ENCODE measurements at regions of chr12 and their contacts with region 1.

Region 1: DNA sequence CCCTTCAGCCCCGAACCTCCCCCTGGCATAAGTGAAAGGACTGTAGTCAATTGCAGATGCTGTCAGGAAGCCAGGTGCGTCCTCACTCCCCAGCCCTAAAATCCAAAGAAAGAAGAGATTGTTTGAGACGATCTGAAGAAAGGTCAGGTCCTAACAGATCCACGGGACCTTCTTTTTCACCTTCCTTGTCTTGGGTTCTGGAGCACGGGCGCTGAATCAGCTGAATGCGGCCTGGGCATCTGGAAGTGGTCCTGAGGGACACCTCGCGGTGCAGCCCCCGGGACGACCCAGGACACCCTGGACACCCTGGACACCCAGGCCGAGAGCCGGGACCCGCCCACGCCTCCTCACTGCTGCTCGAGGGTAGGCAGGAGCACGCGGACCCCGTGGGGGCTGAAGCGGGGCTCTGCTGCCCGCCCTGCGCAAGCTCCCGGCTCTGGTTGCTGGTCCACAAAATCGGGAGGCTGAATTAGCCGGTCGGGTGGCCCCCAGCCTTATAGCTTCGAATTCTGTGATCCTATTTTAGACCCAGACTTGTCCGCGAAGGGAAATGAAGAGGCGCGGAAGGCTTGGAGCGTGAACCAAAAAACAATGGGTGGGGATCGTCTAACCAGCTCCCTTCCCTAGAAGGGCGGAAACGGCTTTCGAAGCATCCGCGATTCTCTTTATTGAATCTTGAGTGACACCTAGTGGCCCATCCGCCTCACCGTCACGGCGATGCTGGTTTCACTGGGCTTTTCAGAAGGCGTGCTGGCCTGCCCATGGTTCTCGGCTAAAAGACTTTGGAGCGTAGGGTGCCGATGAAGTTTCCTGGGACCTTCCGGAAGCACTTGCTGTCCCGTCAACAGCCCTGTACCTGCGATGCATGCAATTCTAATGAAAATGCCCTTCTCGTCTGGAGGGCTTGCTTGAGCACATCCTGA is 46.4 kb upstream of the PLXNC1 start:
- DNase-seq: peak; percentile 81
- H3K4me3 Mint-ChIP-seq: peak overlapping the region; percentile 84
- H3K27ac Mint-ChIP-seq: peak overlapping the region; percentile 72
- H3K4me1 Mint-ChIP-seq: peaks cover 37% of the 10 kb centered on the region
- H3K27me3 Mint-ChIP-seq: peaks cover 10% of the 10 kb centered on the region

Region 2: DNA sequence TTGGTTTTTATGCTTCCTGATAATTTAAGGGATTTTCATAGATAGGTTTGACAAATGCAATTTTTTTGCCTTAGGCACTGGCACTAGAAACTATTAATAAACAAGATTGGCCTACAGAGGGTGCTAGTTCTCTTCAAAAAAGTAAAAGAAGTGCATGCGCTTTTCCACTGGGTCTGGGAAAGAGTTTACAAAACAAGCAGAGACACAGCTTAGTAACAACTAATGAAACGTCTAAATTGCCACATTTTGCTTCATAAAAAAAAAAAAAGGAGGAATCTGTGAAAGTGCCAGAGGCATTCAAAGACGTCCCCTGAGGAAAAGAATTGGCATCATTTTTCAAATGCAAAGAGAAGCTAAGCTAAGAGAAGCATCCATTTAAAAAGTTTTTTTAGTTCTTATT is 1114.6 kb before region 1 on chr12:
- intact Hi-C with region 1: loop called (anchors 1 kb)
- DNase-seq: no peak
- H3K4me3 Mint-ChIP-seq: no peak overlapping the region
- H3K27ac Mint-ChIP-seq: peak overlapping the region; percentile 79
- H3K4me1 Mint-ChIP-seq: peaks cover 30% of the 10 kb centered on the region
- H3K27me3 Mint-ChIP-seq: no peaks in the 10 kb centered on the region

Region 3: GRCh38 chr12:93419388-93420034 is 682.5 kb before region 1 on chr12:
- intact Hi-C with region 1: loop called (anchors 5 kb)
- DNase-seq: no peak
- H3K4me3 Mint-ChIP-seq: no peak overlapping the region
- H3K27ac Mint-ChIP-seq: peak overlapping the region; percentile 3
- H3K4me1 Mint-ChIP-seq: peaks cover 73% of the 10 kb centered on the region
- H3K27me3 Mint-ChIP-seq: no peaks in the 10 kb centered on the region

Region 4: DNA sequence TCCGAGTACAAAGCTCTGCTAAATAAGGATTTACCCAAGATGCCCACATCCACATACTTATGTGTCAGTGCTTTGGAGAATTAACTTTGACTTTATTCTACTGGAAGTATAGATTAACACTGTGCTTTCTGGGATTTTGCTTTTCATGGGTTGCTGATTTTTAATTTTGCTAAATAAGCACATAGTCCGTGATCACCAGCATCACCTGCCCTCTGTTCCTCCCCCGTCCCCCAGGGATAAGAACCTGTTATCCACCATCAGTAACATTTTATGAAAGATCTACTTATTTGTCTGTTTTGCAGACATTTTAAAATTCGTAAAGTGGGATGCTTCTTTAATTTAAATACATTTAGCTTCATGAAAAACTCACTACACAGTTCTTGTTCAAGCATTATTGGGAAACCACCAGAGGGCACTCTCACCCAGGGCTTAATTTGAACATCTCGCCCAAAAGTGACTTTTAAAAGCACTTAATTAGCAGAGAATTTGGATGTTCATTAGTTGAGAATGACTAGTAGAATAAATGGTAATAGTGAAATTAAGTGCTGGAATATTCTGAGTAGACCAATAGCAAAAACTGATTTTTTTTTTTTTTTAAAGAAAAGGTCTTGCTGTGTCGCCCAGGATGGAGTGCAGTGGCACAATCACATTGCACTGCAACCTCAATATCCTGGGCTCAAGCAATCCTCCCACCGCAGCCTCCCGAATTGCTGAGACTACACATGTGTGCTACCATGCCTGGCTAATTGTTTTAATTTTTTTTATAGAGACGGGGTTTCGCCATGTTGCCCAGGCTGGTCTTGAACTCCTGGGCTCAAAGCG is 599.0 kb before region 1 on chr12:
- intact Hi-C with region 1: loop called (anchors 1 kb)
- DNase-seq: peak; percentile 42
- H3K4me3 Mint-ChIP-seq: no peak overlapping the region
- H3K27ac Mint-ChIP-seq: no peak overlapping the region
- H3K4me1 Mint-ChIP-seq: peaks cover 32% of the 10 kb centered on the region
- H3K27me3 Mint-ChIP-seq: no peaks in the 10 kb centered on the region

Region 5: GRCh38 chr12:93742110-93742934 is 359.7 kb before region 1 on chr12:
- intact Hi-C with region 1: loop called (anchors 1 kb)
- DNase-seq: peak; percentile 40
- H3K4me3 Mint-ChIP-seq: peak overlapping the region; percentile 86
- H3K27ac Mint-ChIP-seq: peak overlapping the region; percentile 86
- H3K4me1 Mint-ChIP-seq: peaks cover 50% of the 10 kb centered on the region
- H3K27me3 Mint-ChIP-seq: peaks cover 2% of the 10 kb centered on the region

Region 6: GRCh38 chr12:93847517-93848474 is 254.2 kb before region 1 on chr12:
- intact Hi-C with region 1: loop called (anchors 1 kb)
- DNase-seq: peak; percentile 33
- H3K4me3 Mint-ChIP-seq: peak overlapping the region; percentile 49
- H3K27ac Mint-ChIP-seq: peak overlapping the region; percentile 86
- H3K4me1 Mint-ChIP-seq: peaks cover 74% of the 10 kb centered on the region
- H3K27me3 Mint-ChIP-seq: no peaks in the 10 kb centered on the region

Region 7: GRCh38 chr12:94078138-94078723 is 23.8 kb before region 1 on chr12:
- intact Hi-C with region 1: loop called (anchors 2 kb)
- DNase-seq: no peak
- H3K4me3 Mint-ChIP-seq: no peak overlapping the region
- H3K27ac Mint-ChIP-seq: no peak overlapping the region
- H3K4me1 Mint-ChIP-seq: peaks cover 20% of the 10 kb centered on the region
- H3K27me3 Mint-ChIP-seq: peaks cover 4% of the 10 kb centered on the region

Region 8: DNA sequence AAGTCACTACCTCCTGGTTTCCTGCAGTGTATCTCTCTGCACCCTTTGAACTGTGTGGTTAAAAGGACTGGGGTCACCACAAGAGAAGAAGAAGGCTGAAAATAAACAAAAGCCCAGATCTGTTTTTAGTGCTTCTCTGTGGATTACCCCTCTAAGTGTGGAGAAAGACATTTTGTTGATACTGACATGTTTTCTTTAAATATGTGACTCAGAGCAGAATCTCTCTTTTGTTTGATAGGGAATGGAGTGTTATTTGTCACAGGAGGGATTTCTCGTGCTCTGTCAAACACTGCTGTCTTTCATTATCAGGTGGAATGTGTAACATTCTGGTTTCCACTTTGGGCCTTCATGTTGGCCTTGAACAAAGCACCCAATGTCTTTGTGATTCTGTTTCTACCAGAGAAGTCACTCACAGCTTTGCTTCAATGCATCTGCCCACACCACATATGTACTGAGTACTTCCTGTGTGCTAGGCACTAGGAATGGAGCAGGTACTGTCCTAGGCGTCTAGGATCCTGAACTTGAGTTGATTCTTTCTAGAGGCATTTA is 128.4 kb after region 1 on chr12:
- intact Hi-C with region 1: no loop called
- DNase-seq: no peak
- H3K4me3 Mint-ChIP-seq: peak overlapping the region; percentile 12
- H3K27ac Mint-ChIP-seq: no peak overlapping the region
- H3K4me1 Mint-ChIP-seq: peaks cover 12% of the 10 kb centered on the region
- H3K27me3 Mint-ChIP-seq: no peaks in the 10 kb centered on the region

Region 9: GRCh38 chr12:94435511-94435927 is 333.5 kb after region 1 on chr12:
- intact Hi-C with region 1: no loop called
- DNase-seq: no peak
- H3K4me3 Mint-ChIP-seq: no peak overlapping the region
- H3K27ac Mint-ChIP-seq: no peak overlapping the region
- H3K4me1 Mint-ChIP-seq: peaks cover 25% of the 10 kb centered on the region
- H3K27me3 Mint-ChIP-seq: no peaks in the 10 kb centered on the region

Measured in activated T-helper 1 cell treated with anti-CD3 and anti-CD28 coated beads, Interleukin-12 subunit alpha, Interleukin-12 subunit beta, Interleukin-2, Interleukin-4 antibody, amounts not matched to agents 30 ng/mL and 10 ng/mL and 1 ng/mL, durations not matched to agents 14 hours and 24 hours and 36 hours (primary cell).